Right lobe of liver (tissue), 6 donors: ENCODE measurements at regions of chr11 and their contacts with region 1.

Region 1: GRCh38 chr11:12599408-12600143 is 74.6 kb upstream of the TEAD1 start:
- DNase-seq: peak; percentile 74 to 86 (median 82)
- ATAC-seq: peak; percentile 93 to 98 (median 96)
- H3K4me3 ChIP-seq: no peak overlapping the region
- H3K27ac ChIP-seq: no peak overlapping the region
- H3K4me1 ChIP-seq: peaks cover 0 to 7% (median 1%) of the 10 kb centered on the region in 4 donors
- H3K27me3 ChIP-seq: no peaks in the 10 kb centered on the region
- CTCF ChIP-seq: peak; percentile 78 to 93 (median 84)
- POLR2A ChIP-seq: no peak

Region 2: GRCh38 chr11:12485328-12485727 is 114.2 kb before region 1 on chr11:
- intact Hi-C with region 1: no loop called
- DNase-seq: no peak
- ATAC-seq: no peak
- H3K4me3 ChIP-seq: no peak overlapping the region
- H3K27ac ChIP-seq: no peak overlapping the region
- H3K4me1 ChIP-seq: no peaks in the 10 kb centered on the region
- H3K27me3 ChIP-seq: no peaks in the 10 kb centered on the region
- CTCF ChIP-seq: peak; percentile 33 to 40 (median 38)
- POLR2A ChIP-seq: no peak

Region 3: DNA sequence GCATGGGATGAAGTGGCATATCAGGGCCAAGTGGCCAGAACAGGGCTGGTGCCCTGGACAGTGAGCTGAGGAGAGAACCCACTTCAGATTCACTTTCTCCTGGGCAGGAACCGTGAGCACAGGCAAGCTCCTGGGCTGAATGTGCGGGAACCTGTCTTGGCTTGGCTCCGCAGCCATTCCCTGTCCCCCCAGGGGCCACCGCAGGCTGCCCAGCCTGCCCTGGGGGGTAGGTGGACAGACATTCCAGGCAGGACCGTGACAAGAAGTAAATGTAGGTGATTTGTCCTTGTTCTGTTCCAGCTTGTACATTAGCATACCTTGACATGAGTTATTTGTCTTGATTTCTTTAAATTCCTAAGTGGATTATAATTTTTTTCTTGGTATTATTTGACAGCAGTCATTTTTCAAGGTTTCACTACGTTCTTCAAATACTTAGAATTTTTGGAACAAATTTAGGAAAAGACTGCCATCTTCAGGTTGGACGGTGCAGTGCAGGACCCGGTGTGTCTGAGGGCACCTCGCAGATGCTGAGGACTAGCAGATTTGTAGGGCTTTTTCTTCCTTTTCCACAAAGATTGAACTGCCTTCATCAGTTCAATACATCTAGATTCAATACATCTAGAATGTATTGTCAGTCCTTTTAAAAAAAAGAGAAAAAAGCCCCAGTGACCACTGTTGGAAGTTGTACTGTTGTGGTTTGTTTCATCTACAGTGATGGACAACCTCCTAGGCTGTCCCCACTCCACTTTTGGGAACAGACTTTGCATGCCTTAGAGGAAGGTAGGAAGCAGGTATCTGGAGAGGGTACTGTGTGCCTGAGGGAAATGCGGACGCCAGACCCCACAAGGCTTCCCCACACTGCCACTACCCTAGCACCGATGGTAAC is 294.5 kb after region 1 on chr11:
- intact Hi-C with region 1: loop called (anchors 5 to 10 kb)
- DNase-seq: peak in 2 of 3 donors; percentile 37 to 53
- ATAC-seq: peak; percentile 72 to 75 (median 74)
- H3K4me3 ChIP-seq: no peak overlapping the region
- H3K27ac ChIP-seq: no peak overlapping the region
- H3K4me1 ChIP-seq: peaks cover 0 to 3% (median 0%) of the 10 kb centered on the region in 4 donors
- H3K27me3 ChIP-seq: no peaks in the 10 kb centered on the region
- CTCF ChIP-seq: peak; percentile 81 to 88 (median 84)
- POLR2A ChIP-seq: no peak